ENCODE measurements at regions of chr17 and their contacts with region 1.

Region 1: GRCh38 chr17:41966463-41967140 is at the start of gene CNP:
- DNase-seq: peak; percentile 90

Region 2: GRCh38 chr17:41918314-41919164 is 48.1 kb before region 1 on chr17 and contains the start of gene ACLY:
- CTCF ChIA-PET with region 1: no interaction called
- POLR2A ChIA-PET with region 1: interaction called, 19 read pairs
- DNase-seq: peak; percentile 100

Region 3: GRCh38 chr17:41982026-41982760 is 15.6 kb after region 1 on chr17:
- CTCF ChIA-PET with region 1: no interaction called
- POLR2A ChIA-PET with region 1: interaction called, 29 read pairs
- DNase-seq: no peak

Region 4: GRCh38 chr17:42101513-42102319 is 135.1 kb after region 1 on chr17:
- CTCF ChIA-PET with region 1: interaction called, 4 read pairs
- POLR2A ChIA-PET with region 1: interaction called, 14 read pairs
- DNase-seq: peak; percentile 87

Region 5: DNA sequence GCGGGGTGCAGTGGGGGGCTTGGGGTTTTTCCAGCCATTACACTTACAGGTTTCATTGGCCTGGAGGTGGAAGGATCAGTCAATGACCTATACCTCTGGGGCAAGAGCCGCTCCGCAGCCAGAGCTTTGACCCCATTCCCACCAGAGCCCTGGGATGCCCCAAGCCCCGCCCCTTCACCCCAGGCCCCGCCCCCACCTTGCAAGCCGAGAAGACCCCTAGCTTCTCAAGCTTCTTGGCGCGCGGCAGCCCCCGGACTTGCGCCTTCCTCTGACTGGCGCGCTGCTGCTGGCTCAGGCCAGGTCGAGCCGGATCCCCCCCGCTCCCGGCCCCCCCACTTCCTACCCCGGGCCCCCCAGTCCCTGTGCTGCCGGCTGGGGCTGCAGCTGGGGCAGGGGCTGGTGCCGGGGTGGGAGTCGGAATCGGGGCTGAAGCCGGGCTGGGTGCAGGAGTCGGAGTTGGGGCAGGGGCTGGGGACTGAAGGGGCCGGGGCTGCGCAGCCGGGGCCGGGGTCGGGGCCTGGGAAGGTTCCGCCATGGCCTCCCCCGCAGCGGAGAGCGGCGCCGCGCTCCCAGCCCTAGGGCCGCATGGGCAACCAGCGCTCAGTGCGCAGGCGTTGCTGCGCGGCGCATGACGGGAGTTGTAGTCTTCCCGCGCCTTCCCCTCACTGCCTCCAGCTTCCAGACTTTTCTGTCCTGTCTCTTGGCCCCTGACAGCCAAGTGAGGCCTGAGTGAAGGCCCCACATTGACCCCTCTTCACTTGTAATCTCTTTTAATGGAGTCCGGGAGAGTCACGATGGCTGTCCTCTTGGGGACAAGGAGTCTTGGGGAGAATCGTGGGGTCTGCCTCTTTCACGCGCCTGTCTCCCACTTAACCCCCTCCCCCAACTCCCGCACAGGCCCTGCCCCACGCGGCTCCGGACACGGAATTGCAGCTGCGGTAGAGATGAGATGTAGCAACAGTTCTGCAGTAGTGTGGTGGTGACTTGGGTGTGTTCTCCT is 154.5 kb after region 1 on chr17 and contains the start of gene KAT2A:
- CTCF ChIA-PET with region 1: interaction called, 5 read pairs
- POLR2A ChIA-PET with region 1: interaction called, 12 read pairs
- DNase-seq: peak; percentile 94

Region 6: GRCh38 chr17:42193969-42194899 is 227.6 kb after region 1 on chr17 and contains the start of gene GHDC:
- CTCF ChIA-PET with region 1: no interaction called
- POLR2A ChIA-PET with region 1: no interaction called
- DNase-seq: peak; percentile 87

Measured in HEK293T (cell line).